BJ (cell line): ENCODE measurements at regions of chr11 and their contacts with region 1.

Region 1: GRCh38 chr11:94885133-94885532 is 88.2 kb downstream of the CWC15 start:
- DNase-seq: no peak
- H3K4me3 ChIP-seq: no peak overlapping the region
- H3K27me3 ChIP-seq: no peaks in the 10 kb centered on the region
- CTCF ChIP-seq: no peak

Region 2: GRCh38 chr11:94897330-94897768 is 12.2 kb after region 1 on chr11:
- CTCF ChIA-PET with region 1: interaction called, 10 read pairs
- POLR2A ChIA-PET with region 1: no interaction called
- DNase-seq: no peak
- H3K4me3 ChIP-seq: no peak overlapping the region
- H3K27me3 ChIP-seq: no peaks in the 10 kb centered on the region
- CTCF ChIP-seq: peak; percentile 87